ENCODE measurements at regions of chr6 and their contacts with region 1.

Region 1: DNA sequence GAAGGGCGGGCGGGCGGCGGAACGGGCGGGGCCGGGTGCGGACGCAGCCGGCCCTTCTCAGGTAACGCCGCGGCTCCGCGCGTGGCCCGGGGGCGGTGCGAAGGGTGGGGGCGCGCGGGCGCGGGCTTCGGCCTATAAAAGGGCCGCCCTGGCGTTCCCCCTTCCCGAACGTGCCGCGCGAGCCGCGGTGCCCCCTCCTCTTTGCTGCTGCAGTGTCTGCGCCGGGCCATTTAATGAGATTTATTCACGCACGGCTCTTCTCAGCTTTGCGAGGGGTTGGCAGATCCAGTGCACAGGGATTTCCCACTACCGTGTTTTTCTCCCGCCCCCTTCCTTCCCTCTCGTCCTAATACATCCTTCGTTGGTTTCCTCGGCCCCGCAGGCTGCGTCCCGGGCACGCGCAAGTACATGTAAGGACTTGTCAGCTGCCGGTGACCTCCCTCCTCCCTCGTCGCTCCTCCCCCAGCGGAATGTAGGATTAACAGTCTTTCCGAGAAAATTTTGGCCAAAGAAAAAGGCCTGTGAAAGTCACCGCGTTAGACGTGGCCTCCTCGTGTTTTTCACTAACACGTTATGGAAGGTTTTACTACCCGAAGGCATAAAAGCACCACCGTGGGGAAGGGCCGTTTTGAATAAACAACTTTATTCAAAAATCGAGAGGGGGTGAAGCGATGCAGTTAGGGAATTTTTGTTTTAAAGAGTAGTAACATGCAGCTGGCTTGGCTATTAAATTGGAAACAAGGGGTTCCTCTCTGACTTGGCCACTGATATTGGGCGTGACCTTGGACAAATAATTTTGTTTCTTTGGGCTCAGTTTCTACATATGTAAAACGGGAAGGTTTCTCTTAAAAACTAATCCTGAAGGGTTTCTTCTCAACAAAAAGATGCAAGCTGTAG is 966 bp upstream of the REV3L start:
- DNase-seq: peak in 3 of 5 donors; percentile 89
- H3K4me3 ChIP-seq: peak overlapping the region; percentile 74
- H3K4me3 Mint-ChIP-seq: peak overlapping the region; percentile 91 to 99 (median 98)
- H3K27ac ChIP-seq: peak overlapping the region; percentile 80
- H3K27ac Mint-ChIP-seq: peak overlapping the region; percentile 97 to 100 (median 98)
- H3K4me1 ChIP-seq: peaks cover 57% of the 10 kb centered on the region
- H3K4me1 Mint-ChIP-seq: peaks cover 33 to 58% (median 45%) of the 10 kb centered on the region in 4 donors
- H3K27me3 ChIP-seq: no peaks in the 10 kb centered on the region
- H3K27me3 Mint-ChIP-seq: peaks cover 0 to 2% of the 10 kb centered on the region in 2 donors

Region 2: DNA sequence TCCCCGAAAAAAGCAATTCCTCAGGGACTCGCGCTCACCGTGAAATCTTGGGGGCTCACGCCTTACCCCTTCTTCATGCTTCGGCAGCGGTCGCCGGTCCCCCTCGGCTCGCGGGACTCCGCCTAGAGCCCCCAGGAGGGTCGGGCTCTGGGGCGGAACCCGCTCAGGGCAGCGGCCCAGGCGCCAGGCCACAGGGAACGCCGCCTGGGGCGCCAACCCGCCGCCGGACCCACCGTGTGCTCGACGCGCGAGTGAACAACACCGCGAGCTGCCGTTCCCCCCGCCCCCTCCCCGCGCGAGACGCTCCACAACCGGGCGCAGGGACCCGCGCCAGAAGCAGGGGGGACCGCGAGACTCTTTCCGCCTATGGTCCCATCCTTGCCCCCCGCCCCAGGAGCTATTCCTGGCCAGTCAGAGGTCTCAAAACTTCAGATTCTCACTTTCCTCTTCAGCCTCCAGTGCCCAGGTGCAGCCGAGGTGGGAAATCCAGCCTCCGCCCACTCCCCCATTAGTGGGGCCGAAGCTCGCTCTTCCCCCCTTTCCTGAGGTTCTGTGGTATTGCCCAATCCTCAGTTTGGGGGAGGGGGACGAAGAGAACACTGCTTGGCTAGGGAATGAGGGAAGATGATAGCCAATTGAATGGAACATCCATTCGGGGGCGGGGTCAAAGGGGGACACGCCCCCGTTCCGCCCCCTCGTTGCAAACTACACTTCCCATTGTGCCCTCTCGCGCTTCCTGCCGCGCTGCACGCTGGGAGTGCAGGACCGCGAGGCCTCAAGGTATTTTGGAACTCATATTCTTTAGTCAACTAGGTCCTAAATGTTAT is 1304.4 kb before region 1 on chr6 and contains the start of gene WASF1:
- CTCF ChIA-PET with region 1: no interaction called
- POLR2A ChIA-PET with region 1: no interaction called
- intact Hi-C with region 1: loop called (anchors 5 kb)
- DNase-seq: peak; percentile 90 to 93 (median 92)
- H3K4me3 ChIP-seq: peak within 1 kb of the TSS; percentile 77 to 92
- H3K4me3 Mint-ChIP-seq: peak within 1 kb of the TSS; percentile 82 to 92 (median 86)
- H3K27ac ChIP-seq: peak within 1 kb of the TSS; percentile 88
- H3K27ac Mint-ChIP-seq: peak within 1 kb of the TSS; percentile 24 to 90 (median 64)
- H3K4me1 ChIP-seq: peaks cover 46% of the 10 kb centered on the region
- H3K4me1 Mint-ChIP-seq: peaks cover 5 to 7% (median 6%) of the 10 kb centered on the region in 4 donors
- H3K27me3 ChIP-seq: no peaks in the 10 kb centered on the region
- H3K27me3 Mint-ChIP-seq: peaks cover 4 to 5% of the 10 kb centered on the region in 2 donors
- total RNA-seq, gene WASF1: 0.39 to 0.70 TPM

Region 3: DNA sequence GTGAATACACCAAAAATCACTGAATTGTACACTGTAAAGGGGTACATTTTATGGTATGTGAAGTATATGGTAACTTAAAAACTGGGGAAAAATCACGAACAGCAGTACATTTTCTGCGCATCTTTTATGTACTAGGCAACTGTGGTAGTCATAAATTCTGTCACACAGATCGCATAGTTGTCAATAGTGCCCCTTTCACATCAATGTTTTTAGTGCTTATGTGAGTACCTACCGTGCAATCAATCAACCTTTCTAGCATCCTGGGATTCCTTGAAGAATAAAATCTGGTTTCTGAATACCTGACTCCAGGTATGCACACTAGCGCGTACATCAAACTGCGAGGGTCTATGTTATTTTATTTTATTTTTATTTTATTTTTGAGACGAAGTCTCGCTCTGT is 502.8 kb before region 1 on chr6:
- CTCF ChIA-PET with region 1: no interaction called
- POLR2A ChIA-PET with region 1: no interaction called
- intact Hi-C with region 1: loop called (anchors 1 kb)
- DNase-seq: peak in 2 of 5 donors; percentile 1 to 29
- H3K4me3 ChIP-seq: peak overlapping the region; percentile 20 to 95
- H3K4me3 Mint-ChIP-seq: peak overlapping the region; percentile 93 to 99 (median 98)
- H3K27ac ChIP-seq: peak overlapping the region; percentile 86
- H3K27ac Mint-ChIP-seq: peak overlapping the region; percentile 99 to 100 (median 100)
- H3K4me1 ChIP-seq: peaks cover 17% of the 10 kb centered on the region
- H3K4me1 Mint-ChIP-seq: peaks cover 28 to 49% (median 30%) of the 10 kb centered on the region in 4 donors
- H3K27me3 ChIP-seq: no peaks in the 10 kb centered on the region
- H3K27me3 Mint-ChIP-seq: no peaks in the 10 kb centered on the region

Region 4: GRCh38 chr6:111462770-111463391 is 21.1 kb before region 1 on chr6:
- CTCF ChIA-PET with region 1: interaction called, 12 read pairs
- POLR2A ChIA-PET with region 1: interaction called, 17 read pairs
- intact Hi-C with region 1: loop called (anchors 2 kb)
- DNase-seq: no peak
- H3K4me3 ChIP-seq: no peak overlapping the region
- H3K4me3 Mint-ChIP-seq: peak overlapping the region in 3 of 8 donors; percentile 14 to 66 (median 36)
- H3K27ac ChIP-seq: no peak overlapping the region
- H3K27ac Mint-ChIP-seq: peak overlapping the region in 4 of 7 donors; percentile 5 to 83 (median 74)
- H3K4me1 ChIP-seq: peaks cover 16% of the 10 kb centered on the region
- H3K4me1 Mint-ChIP-seq: peaks cover 22 to 41% (median 31%) of the 10 kb centered on the region in 4 donors
- H3K27me3 ChIP-seq: no peaks in the 10 kb centered on the region
- H3K27me3 Mint-ChIP-seq: no peaks in the 10 kb centered on the region

Region 5: DNA sequence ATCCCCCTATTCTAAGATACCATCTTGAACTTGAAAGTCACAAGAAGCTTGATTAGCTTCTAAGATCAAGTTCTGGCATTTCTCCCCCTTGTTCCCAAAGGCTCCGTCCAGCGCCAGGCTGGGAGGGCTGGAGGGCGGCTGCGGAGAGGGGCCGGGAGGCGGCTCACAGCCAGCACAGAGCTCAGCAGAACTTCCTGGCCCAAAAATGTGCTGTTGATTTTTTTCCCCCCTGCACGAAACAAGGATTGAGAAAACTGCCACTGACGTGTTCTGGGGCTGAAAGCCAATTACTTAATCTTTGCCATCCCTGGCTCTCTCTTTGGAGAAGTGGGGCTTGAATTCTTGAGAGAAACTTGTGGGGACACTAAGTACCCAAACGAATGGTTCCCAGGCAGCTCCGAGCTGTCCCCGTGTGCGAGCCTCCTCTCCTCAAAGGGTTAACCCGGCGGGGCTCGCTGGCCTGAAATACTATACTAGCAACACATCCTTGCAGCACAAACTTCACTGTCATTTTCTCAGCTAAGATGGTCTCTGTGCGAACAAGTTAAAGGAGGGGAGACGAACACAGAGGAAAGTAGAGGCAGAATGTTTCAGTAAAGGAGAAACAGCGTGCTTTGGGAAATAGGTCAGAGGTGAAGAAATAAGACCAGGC is 121.2 kb after region 1 on chr6:
- CTCF ChIA-PET with region 1: interaction called, 4 read pairs
- POLR2A ChIA-PET with region 1: interaction called, 42 read pairs
- intact Hi-C with region 1: loop called (anchors 1 kb)
- DNase-seq: no peak
- H3K4me3 ChIP-seq: peak overlapping the region; percentile 59 to 79
- H3K4me3 Mint-ChIP-seq: peak overlapping the region; percentile 88 to 97 (median 92)
- H3K27ac ChIP-seq: peak overlapping the region; percentile 80
- H3K27ac Mint-ChIP-seq: peak overlapping the region; percentile 90 to 97 (median 95)
- H3K4me1 ChIP-seq: peaks cover 43% of the 10 kb centered on the region
- H3K4me1 Mint-ChIP-seq: peaks cover 27 to 61% (median 47%) of the 10 kb centered on the region in 4 donors
- H3K27me3 ChIP-seq: no peaks in the 10 kb centered on the region
- H3K27me3 Mint-ChIP-seq: no peaks in the 10 kb centered on the region

Region 6: DNA sequence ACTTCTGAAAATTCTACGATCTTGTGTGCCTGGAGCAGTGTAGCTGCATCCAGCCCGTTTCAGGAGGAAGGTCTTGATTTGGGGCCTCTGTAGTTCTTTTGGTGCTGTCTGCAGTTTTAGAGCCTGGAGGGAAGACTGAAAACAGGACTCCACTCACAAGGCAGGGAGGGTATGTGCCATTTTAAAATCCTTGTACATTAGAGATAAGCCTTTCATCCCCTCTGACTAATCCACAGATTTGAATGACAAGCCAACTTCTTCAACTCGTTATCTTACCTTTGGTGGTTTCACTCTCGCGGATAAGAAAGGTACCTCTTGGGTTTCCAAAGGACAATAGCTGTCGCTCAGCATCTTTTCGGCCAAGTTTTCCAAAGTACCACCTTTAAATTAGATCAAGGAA is 219.7 kb after region 1 on chr6:
- CTCF ChIA-PET with region 1: no interaction called
- POLR2A ChIA-PET with region 1: no interaction called
- intact Hi-C with region 1: no loop called
- DNase-seq: no peak
- H3K4me3 ChIP-seq: no peak overlapping the region
- H3K4me3 Mint-ChIP-seq: no peak overlapping the region
- H3K27ac ChIP-seq: no peak overlapping the region
- H3K27ac Mint-ChIP-seq: peak overlapping the region in 6 of 7 donors; percentile 30 to 77 (median 54)
- H3K4me1 ChIP-seq: peaks cover 18% of the 10 kb centered on the region
- H3K4me1 Mint-ChIP-seq: peaks cover 23 to 43% (median 33%) of the 10 kb centered on the region in 4 donors
- H3K27me3 ChIP-seq: no peaks in the 10 kb centered on the region
- H3K27me3 Mint-ChIP-seq: no peaks in the 10 kb centered on the region

Measured in CD4-positive, alpha-beta memory T cell (primary cell).